Lower leg skin (tissue), 4 donors: ENCODE measurements at regions of chr6 and their contacts with region 1.

Region 1: DNA sequence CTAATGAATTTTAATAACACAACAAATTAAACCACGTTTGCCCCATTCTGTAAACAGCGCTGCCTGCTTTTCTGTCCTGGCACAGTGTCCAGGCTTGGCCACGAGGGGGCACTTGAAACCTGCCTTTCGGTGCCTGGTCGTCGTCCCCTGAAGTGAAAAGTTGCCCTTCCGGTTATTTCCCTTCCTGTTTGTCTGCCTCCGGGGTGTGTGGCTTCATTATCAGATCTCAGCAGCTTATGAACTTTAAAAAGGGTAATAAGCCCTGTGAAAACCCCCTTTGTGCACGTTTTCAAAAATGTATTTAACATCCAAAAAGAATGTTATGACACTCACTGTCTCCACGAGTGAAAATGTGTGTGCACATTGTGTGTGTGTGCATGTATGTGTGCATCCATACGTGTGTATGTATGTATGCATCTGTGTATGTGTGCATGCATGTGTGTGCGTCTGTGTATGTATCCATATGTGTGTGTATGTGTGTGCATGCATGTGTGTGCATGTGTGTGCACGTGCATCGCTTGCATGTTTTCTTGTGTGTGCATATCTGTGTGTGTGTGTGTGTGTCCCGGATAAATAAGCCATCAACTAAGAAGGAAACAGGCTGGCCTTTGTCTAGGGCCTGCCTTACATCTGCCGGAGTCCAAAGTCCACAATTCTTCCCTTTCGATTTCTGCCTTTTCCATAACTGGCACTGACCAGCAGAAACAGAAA is 358.4 kb downstream of the THBS2 start:
- DNase-seq: peak; percentile 73 to 96
- H3K4me3 ChIP-seq: no peak overlapping the region
- CTCF ChIP-seq: peak in 1 of 3 donors; percentile 57
- POLR2A ChIP-seq: no peak

Region 2: DNA sequence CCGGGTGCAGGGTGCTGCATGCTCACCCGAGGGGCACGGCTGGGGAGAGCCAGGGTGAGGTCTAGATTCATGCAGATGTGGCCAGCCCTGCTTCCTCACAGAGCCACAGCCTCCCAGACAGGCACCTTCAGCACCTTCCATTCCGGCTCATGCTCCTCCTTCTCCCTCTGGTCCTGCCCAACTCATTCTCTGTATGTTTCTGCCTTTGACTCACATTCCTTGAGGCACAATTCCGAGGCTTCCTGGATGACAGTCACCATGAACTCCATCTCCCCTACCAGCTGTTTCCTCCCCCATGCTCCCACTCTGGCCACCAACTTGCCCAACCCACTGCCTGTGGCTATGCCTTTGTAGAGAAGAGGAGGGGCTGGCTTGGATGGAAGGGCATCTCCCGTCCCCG is 611.0 kb before region 1 on chr6:
- intact Hi-C with region 1: no loop called
- DNase-seq: no peak
- H3K4me3 ChIP-seq: no peak overlapping the region
- CTCF ChIP-seq: no peak
- POLR2A ChIP-seq: no peak

Region 3: DNA sequence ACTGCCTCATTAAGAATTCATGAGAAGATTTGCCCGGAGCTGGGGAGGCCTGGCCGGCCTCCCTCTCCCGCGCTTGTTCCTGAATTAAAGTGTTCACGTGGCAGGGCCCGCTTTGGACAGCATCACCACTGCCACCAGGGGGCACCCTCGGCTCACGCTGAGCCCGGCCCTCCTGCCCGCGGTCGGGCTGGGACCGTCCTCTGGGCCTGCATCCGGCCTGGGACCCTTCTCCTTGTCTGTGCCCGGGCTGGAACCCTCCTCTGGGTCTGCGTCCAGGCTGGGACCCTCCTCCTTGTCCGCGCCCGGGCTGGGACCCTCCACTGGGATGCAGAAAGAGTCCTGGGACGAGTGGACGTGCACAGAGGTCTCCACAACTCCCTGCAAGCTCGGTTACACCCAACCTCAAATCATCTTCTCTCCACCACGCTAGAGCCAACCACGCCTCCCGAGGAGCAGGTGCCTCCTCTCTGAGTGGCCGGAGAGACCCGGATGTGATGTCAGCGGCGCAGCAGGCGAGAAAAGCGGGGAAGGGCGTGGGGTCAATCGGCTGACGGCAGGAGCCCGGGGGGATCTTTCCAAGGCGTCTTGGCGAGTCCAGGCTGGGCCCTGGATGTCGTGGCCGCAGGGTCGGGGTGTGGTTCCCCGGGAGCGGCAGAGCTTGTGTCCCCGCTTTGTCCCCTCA is 524.8 kb before region 1 on chr6:
- intact Hi-C with region 1: loop called (anchors 2 kb)
- DNase-seq: peak; percentile 54 to 94
- H3K4me3 ChIP-seq: no peak overlapping the region
- CTCF ChIP-seq: peak in 1 of 3 donors; percentile 59
- POLR2A ChIP-seq: no peak

Region 4: GRCh38 chr6:168815229-168815628 is 80.0 kb before region 1 on chr6:
- intact Hi-C with region 1: no loop called
- DNase-seq: no peak
- H3K4me3 ChIP-seq: no peak overlapping the region
- CTCF ChIP-seq: no peak
- POLR2A ChIP-seq: no peak

Region 5: GRCh38 chr6:168956884-168957730 is 61.9 kb after region 1 on chr6:
- intact Hi-C with region 1: no loop called
- DNase-seq: peak; percentile 61 to 92
- H3K4me3 ChIP-seq: no peak overlapping the region
- CTCF ChIP-seq: peak in 1 of 3 donors; percentile 41
- POLR2A ChIP-seq: no peak

Region 6: DNA sequence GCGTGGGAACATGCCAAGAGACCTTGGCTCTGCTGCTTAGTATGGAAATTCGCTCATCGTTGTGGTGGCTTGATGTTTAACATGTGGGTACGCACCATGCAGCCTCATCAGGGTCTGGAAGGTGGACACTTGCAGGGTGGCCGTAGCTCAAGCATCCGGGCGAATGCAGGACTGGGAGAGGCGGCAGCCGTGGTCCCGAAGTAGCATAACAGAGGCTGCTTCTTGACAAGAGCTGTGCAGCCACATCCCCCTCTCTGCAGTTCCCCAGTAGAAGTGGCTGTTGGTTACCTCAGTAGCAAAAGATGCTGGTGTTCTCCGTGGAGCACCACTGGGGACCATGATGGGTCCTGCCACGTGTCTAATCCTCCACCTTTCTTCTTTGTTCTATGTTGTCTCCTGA is 163.4 kb after region 1 on chr6:
- intact Hi-C with region 1: no loop called
- DNase-seq: no peak
- H3K4me3 ChIP-seq: no peak overlapping the region
- CTCF ChIP-seq: no peak
- POLR2A ChIP-seq: no peak

Region 7: GRCh38 chr6:169473663-169474062 is 578.4 kb after region 1 on chr6:
- intact Hi-C with region 1: loop called (anchors 10 kb)
- DNase-seq: no peak
- H3K4me3 ChIP-seq: no peak overlapping the region
- CTCF ChIP-seq: no peak
- POLR2A ChIP-seq: no peak